H1 (cell line): ENCODE measurements at regions of chr9 and their contacts with region 1.

Region 1: GRCh38 chr9:132901856-132902831 is 23.4 kb downstream of the SPACA9 start:
- DNase-seq: peak; percentile 54 to 89
- H3K4me3 ChIP-seq: no peak overlapping the region
- H3K27ac ChIP-seq: no peak overlapping the region
- H3K4me1 ChIP-seq: peaks cover 7 to 23% (median 16%) of the 10 kb centered on the region in 4 experiments; a peak in 6 of 7 replicates
- H3K27me3 ChIP-seq: no peaks in the 10 kb centered on the region
- CTCF ChIP-seq: peak; percentile 71 to 97 (median 91)
- EP300 ChIP-seq: no peak
- POLR2A ChIP-seq: no peak
- RAD21 ChIP-seq: peak; percentile 78 to 85

Region 2: GRCh38 chr9:132800038-132800648 is 102.0 kb before region 1 on chr9:
- CTCF ChIA-PET with region 1: interaction called, 52 read pairs
- POLR2A ChIA-PET with region 1: no interaction called
- DNase-seq: peak; percentile 80 to 87
- H3K4me3 ChIP-seq: no peak overlapping the region
- H3K27ac ChIP-seq: no peak overlapping the region
- H3K4me1 ChIP-seq: peaks cover 0 to 4% (median 0%) of the 10 kb centered on the region in 4 experiments; a peak in 1 of 7 replicates
- H3K27me3 ChIP-seq: peaks cover 0 to 36% (median 26%) of the 10 kb centered on the region in 4 experiments; a peak in 6 of 7 replicates
- CTCF ChIP-seq: peak; percentile 75 to 98 (median 93)
- EP300 ChIP-seq: 0 out of 3 replicates have a peak, but pooled peaks of 1 of the 2 experiments have one; percentile 42
- POLR2A ChIP-seq: no peak
- RAD21 ChIP-seq: peak; percentile 97 to 98

Region 3: GRCh38 chr9:132813115-132813771 is 88.9 kb before region 1 on chr9:
- CTCF ChIA-PET with region 1: interaction called, 52 read pairs
- POLR2A ChIA-PET with region 1: no interaction called
- DNase-seq: no peak
- H3K4me3 ChIP-seq: no peak overlapping the region
- H3K27ac ChIP-seq: no peak overlapping the region
- H3K4me1 ChIP-seq: no peaks in the 10 kb centered on the region; a peak in 1 of 7 replicates
- H3K27me3 ChIP-seq: no peaks in the 10 kb centered on the region
- CTCF ChIP-seq: no peak
- EP300 ChIP-seq: no peak
- POLR2A ChIP-seq: no peak
- RAD21 ChIP-seq: no peak

Region 4: GRCh38 chr9:132849185-132849706 is 52.9 kb before region 1 on chr9:
- CTCF ChIA-PET with region 1: interaction called, 16 read pairs
- POLR2A ChIA-PET with region 1: no interaction called
- DNase-seq: no peak
- H3K4me3 ChIP-seq: peak overlapping the region in 1 of 4 experiments; percentile 3; a peak in 1 of 8 replicates
- H3K27ac ChIP-seq: no peak overlapping the region
- H3K4me1 ChIP-seq: peaks cover 2 to 5% (median 4%) of the 10 kb centered on the region in 4 experiments; a peak in 6 of 7 replicates
- H3K27me3 ChIP-seq: no peaks in the 10 kb centered on the region; a peak in 1 of 7 replicates
- CTCF ChIP-seq: no peak
- EP300 ChIP-seq: no peak
- POLR2A ChIP-seq: no peak
- RAD21 ChIP-seq: no peak

Region 5: DNA sequence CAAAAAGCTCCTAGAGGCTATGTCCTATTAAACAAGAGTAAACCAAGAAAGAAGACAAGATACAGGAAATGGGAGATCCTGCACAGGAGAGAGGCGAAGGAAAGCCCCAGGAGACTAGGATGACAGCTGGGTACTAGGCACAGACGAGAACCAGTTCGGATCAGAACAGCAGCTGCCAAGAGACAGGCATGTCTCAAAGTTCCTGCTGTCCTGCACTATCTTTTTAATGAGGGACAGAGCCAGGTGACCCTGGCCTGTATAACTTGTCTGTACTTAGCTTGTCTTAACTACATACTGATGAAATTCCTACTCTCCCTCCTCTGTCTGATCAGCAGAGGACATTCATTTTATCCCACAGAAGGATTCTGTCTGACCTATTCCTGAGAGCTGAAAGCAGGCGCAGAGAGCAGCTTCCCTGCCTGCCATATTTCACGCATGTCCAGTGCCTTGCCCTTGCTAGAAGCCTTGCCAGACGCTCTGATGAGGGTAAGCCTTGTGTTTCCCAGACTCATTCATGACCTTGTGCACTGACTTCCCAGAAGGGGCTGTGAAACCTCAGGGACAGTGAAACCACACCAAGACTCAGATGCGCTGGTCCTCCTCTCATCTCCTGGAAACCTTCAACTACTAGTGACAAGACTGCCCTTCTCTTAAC is 17.6 kb after region 1 on chr9:
- CTCF ChIA-PET with region 1: interaction called, 80 read pairs
- POLR2A ChIA-PET with region 1: interaction called, 4 read pairs
- DNase-seq: no peak
- H3K4me3 ChIP-seq: no peak overlapping the region
- H3K27ac ChIP-seq: no peak overlapping the region
- H3K4me1 ChIP-seq: no peaks in the 10 kb centered on the region
- H3K27me3 ChIP-seq: no peaks in the 10 kb centered on the region
- CTCF ChIP-seq: no peak
- EP300 ChIP-seq: no peak
- POLR2A ChIP-seq: no peak
- RAD21 ChIP-seq: no peak

Region 6: GRCh38 chr9:132935026-132935425 is 32.9 kb after region 1 on chr9:
- CTCF ChIA-PET with region 1: interaction called, 24 read pairs
- POLR2A ChIA-PET with region 1: no interaction called
- DNase-seq: no peak
- H3K4me3 ChIP-seq: no peak overlapping the region
- H3K27ac ChIP-seq: no peak overlapping the region
- H3K4me1 ChIP-seq: peaks cover 0 to 2% (median 0%) of the 10 kb centered on the region in 4 experiments; a peak in 1 of 7 replicates
- H3K27me3 ChIP-seq: no peaks in the 10 kb centered on the region
- CTCF ChIP-seq: no peak
- EP300 ChIP-seq: no peak
- POLR2A ChIP-seq: no peak
- RAD21 ChIP-seq: no peak

Region 7: GRCh38 chr9:132973713-132974112 is 71.6 kb after region 1 on chr9:
- CTCF ChIA-PET with region 1: interaction called, 40 read pairs
- POLR2A ChIA-PET with region 1: no interaction called
- DNase-seq: no peak
- H3K4me3 ChIP-seq: no peak overlapping the region
- H3K27ac ChIP-seq: no peak overlapping the region
- H3K4me1 ChIP-seq: peaks cover 0 to 9% (median 3%) of the 10 kb centered on the region in 4 experiments; a peak in 6 of 7 replicates
- H3K27me3 ChIP-seq: peaks cover 0 to 23% (median 9%) of the 10 kb centered on the region in 4 experiments; a peak in 5 of 7 replicates
- CTCF ChIP-seq: no peak
- EP300 ChIP-seq: no peak
- POLR2A ChIP-seq: no peak
- RAD21 ChIP-seq: no peak

Region 8: GRCh38 chr9:133087429-133088145 is 185.4 kb after region 1 on chr9:
- CTCF ChIA-PET with region 1: no interaction called
- POLR2A ChIA-PET with region 1: no interaction called
- DNase-seq: no peak
- H3K4me3 ChIP-seq: no peak overlapping the region
- H3K27ac ChIP-seq: no peak overlapping the region
- H3K4me1 ChIP-seq: no peaks in the 10 kb centered on the region
- H3K27me3 ChIP-seq: peaks cover 0 to 3% (median 0%) of the 10 kb centered on the region in 4 experiments; a peak in 1 of 7 replicates
- CTCF ChIP-seq: no peak
- EP300 ChIP-seq: no peak
- POLR2A ChIP-seq: no peak
- RAD21 ChIP-seq: no peak

Region 9: GRCh38 chr9:133275105-133276000 is 373.2 kb after region 1 on chr9 and contains the start of gene ABO:
- CTCF ChIA-PET with region 1: no interaction called
- POLR2A ChIA-PET with region 1: no interaction called
- DNase-seq: peak in 1 of 2 experiments; percentile 62
- H3K4me3 ChIP-seq: peak within 1 kb of the TSS; percentile 36 to 68 (median 37)
- H3K27ac ChIP-seq: no peak within 1 kb of the TSS
- H3K4me1 ChIP-seq: no peaks in the 10 kb centered on the region; a peak in 1 of 7 replicates
- H3K27me3 ChIP-seq: peaks cover 34 to 55% (median 47%) of the 10 kb centered on the region in 4 experiments
- CTCF ChIP-seq: peak in 1 of 3 experiments; percentile 23; a peak in 2 of 4 replicates
- EP300 ChIP-seq: no peak
- POLR2A ChIP-seq: no peak
- RAD21 ChIP-seq: peak in 1 of 2 experiments; percentile 26; a peak in 1 of 4 replicates
- total RNA-seq, gene ABO: not detected in 2 replicates